K562 (cell line): ENCODE measurements at regions of chr6 and their contacts with region 1.

Region 1: DNA sequence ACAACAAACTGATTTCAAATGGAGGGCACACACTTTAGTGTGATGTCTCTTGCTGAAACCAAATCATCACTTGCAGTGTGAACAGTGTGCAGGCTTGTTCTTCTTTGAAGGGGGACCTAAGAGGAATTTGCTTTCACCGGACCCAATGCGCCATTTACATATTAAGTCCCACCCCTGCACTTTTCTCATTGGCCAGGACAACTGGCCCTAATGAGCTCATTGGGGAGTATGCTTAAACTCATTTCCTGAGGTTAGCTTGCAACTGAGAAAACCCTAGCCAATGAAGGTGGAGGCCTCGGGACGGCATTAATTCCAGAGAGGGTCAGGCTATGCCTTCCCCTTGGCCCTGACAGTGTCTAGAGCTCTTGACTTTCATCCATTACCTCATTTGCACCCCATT is 58.7 kb downstream of the VEGFA start:
- DNase-seq: peak; percentile 82 to 95 (median 94)
- ATAC-seq: peak; percentile 95
- H3K4me3 ChIP-seq: no peak overlapping the region
- H3K27ac ChIP-seq: no peak overlapping the region
- H3K4me1 ChIP-seq: peaks cover 7 to 20% of the 10 kb centered on the region in 2 experiments; a peak in 4 of 5 replicates
- H3K27me3 ChIP-seq: peaks cover 13 to 15% of the 10 kb centered on the region in 2 experiments; a peak in 3 of 5 replicates
- CTCF ChIP-seq: no peak
- EP300 ChIP-seq: no peak
- POLR2A ChIP-seq: no peak
- RAD21 ChIP-seq: no peak

Region 2: GRCh38 chr6:43817192-43817591 is 11.5 kb before region 1 on chr6:
- CTCF ChIA-PET with region 1: no interaction called
- POLR2A ChIA-PET with region 1: interaction called, 14 read pairs
- in situ Hi-C with region 1: no loop called
- intact Hi-C with region 1: no loop called
- DNase-seq: peak; percentile 69 to 81 (median 72)
- ATAC-seq: peak; percentile 96
- H3K4me3 ChIP-seq: no peak overlapping the region
- H3K27ac ChIP-seq: no peak overlapping the region
- H3K4me1 ChIP-seq: peaks cover 0 to 12% of the 10 kb centered on the region in 2 experiments; a peak in 3 of 5 replicates
- H3K27me3 ChIP-seq: no peaks in the 10 kb centered on the region
- CTCF ChIP-seq: peak; percentile 78 to 85 (median 80)
- EP300 ChIP-seq: peak; percentile 35; the same call in 1 of the 2 replicates
- POLR2A ChIP-seq: no peak
- RAD21 ChIP-seq: peak; percentile 32 to 69; a peak in 3 of 4 replicates